Astrocyte of the cerebellum (primary cell): ENCODE measurements at regions of chr15 and their contacts with region 1.

Region 1: DNA sequence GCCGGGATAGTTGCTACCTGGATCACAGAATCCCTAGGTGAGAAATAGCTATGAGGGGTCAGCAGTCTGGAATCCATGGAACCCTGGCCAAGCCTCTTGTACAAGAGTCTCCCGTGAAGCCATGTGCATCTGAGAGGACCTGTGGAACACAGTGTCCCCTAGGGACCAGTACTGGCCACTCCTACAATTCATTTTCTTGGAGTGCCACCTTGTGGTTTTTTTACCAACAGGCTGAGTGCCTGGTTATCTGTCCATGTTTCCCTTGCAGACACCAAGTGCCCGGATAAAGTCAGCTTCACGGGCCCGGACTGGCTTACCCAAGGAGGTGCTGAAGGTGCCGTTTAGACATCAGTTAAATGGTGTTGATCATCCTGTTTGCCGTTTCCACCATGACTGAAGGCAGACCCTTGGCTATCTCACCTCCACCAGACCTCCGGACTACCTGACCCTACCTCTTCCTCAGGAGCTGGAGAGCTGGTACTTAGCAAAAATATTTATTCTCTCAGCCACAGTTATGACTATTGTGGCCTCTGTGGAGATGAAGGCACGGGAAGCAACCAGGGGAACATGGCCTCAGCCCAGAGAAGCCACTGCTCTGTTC is 93.9 kb downstream of the RBPMS2 start:
- DNase-seq: peak; percentile 41
- H3K4me3 ChIP-seq: no peak overlapping the region
- CTCF ChIP-seq: peak; percentile 69

Region 2: DNA sequence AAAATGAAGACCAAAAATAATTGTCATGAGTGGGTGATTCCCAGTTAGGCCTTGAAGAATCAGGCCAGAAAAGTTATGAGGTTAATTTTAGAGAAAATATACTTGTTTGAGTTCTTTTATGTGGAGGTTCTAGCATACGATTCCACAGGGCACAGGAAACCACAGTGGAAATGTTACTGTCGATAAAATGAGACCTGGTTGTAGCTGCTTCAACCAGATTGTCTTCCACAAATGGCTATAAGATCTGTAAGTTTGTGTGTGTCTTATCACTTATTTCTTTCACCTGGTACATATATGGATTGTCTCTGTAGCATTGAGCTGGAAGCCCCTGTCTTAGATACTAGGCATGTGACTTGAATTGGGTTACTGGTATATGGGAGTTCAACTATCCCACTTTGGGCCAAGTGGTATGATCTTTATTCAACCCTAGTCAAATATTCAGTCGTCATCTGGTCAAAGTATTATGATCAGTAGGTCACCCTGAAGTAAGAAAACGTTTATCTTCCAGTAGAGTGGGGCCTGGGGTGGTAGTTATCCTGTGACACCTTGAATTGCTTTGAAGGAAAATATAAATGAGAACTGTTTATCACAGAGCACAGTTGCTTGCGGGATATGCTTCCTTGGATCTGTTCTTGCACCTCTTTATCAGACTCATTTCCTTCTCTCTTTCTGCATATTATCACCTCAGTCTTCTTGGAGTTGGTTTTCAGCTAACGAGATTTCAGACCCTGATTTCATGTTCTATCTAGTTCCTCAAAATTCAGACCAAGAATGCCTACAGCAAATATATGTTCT is 242.7 kb before region 1 on chr15:
- in situ Hi-C with region 1: no loop called
- DNase-seq: no peak
- H3K4me3 ChIP-seq: no peak overlapping the region
- CTCF ChIP-seq: no peak

Region 3: GRCh38 chr15:64720188-64720587 is 38.7 kb after region 1 on chr15:
- in situ Hi-C with region 1: loop called (anchors 5 kb)
- DNase-seq: no peak
- H3K4me3 ChIP-seq: no peak overlapping the region
- CTCF ChIP-seq: no peak